ENCODE measurements at regions of chr2 and their contacts with region 1.

Region 1: GRCh38 chr2:191020221-191020741 is 6.3 kb upstream of the STAT1 start:
- DNase-seq: peak; percentile 97
- ATAC-seq: peak; percentile 92
- H3K4me3 ChIP-seq: peak overlapping the region; percentile 61
- H3K27ac ChIP-seq: peak overlapping the region; percentile 98
- H3K4me1 ChIP-seq: peaks cover 14% of the 10 kb centered on the region
- H3K27me3 ChIP-seq: no peaks in the 10 kb centered on the region
- CTCF ChIP-seq: no peak
- POLR2A ChIP-seq: peak; percentile 85
- RAD21 ChIP-seq: peak; percentile 22; the same call in 1 of the 2 replicates

Region 2: DNA sequence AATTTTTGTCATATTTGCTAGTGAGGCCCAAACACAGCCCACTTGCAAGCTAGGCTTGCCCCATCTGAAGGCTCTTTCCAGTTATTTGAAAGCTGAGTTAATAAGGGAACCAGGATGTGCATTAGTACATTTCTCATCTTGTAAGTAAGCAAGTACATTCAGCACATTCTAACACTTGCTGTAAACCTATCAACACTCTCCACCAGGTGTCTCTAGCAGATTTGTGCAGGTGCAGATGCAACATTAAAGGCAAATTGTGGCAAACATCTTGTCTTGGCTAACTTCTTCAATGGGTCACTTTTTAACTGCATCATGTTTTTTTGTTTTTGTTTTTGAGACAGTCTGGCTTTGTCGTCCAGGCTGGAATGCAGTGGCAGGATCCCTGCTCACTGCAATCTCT is 637.4 kb before region 1 on chr2:
- CTCF ChIA-PET with region 1: no interaction called
- POLR2A ChIA-PET with region 1: no interaction called
- dilution Hi-C with region 1: no loop called
- in situ Hi-C with region 1: no loop called
- intact Hi-C with region 1: no loop called
- DNase-seq: peak; percentile 41
- ATAC-seq: no peak
- H3K4me3 ChIP-seq: no peak overlapping the region
- H3K27ac ChIP-seq: no peak overlapping the region
- H3K4me1 ChIP-seq: no peaks in the 10 kb centered on the region
- H3K27me3 ChIP-seq: no peaks in the 10 kb centered on the region
- CTCF ChIP-seq: peak; percentile 27; the same call in 1 of the 2 replicates
- POLR2A ChIP-seq: no peak
- RAD21 ChIP-seq: peak; percentile 36; the same call in 1 of the 2 replicates

Region 3: DNA sequence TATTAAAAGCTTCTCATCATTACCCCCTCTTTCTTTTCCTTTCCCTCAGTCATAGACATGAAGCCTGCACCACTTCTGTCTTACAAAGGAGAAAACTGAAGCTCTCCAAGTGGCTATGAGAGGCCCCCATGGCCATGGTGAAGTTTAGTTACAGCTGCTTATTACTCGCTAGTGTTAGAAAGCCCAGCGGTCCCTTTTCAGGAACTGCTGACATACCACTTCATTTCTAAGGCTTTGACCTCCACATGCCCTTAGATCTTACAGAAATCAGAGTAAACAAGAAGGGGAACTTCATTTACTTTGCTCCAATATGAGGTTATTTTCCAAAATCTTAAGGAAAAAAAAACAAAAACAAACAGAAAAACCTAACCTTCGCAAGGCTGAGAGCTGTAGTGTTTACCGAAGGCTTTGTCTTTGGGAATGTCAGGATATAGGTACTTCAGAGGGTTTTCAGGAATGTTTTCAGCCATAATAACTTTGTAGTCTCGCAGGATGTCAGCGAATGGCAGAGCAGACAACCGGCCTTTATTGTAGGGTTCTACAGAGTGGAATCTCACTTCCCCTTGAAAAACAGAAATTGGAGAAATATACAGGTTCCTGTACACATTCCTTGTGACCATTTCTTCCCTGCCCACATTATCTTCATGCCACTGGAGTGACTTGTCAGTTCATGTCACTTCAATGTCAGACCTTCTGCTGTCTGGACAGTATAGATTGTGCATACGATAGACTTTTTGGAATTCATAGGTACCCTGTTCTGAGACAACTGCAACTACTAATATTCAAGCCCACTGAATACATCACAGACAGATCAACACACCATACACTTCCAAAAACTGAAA is 12.5 kb after region 1 on chr2:
- CTCF ChIA-PET with region 1: interaction called, 4 read pairs
- POLR2A ChIA-PET with region 1: interaction called, 4 read pairs
- dilution Hi-C with region 1: no loop called
- in situ Hi-C with region 1: no loop called
- intact Hi-C with region 1: loop called (anchors 1 kb)
- DNase-seq: no peak
- ATAC-seq: peak; percentile 32
- H3K4me3 ChIP-seq: no peak overlapping the region
- H3K27ac ChIP-seq: no peak overlapping the region
- H3K4me1 ChIP-seq: peaks cover 6% of the 10 kb centered on the region
- H3K27me3 ChIP-seq: no peaks in the 10 kb centered on the region
- CTCF ChIP-seq: no peak
- POLR2A ChIP-seq: no peak
- RAD21 ChIP-seq: no peak

Measured in IMR-90 (cell line).